GM12878 (cell line): ENCODE measurements at regions of chr5 and their contacts with region 1.

Region 1: DNA sequence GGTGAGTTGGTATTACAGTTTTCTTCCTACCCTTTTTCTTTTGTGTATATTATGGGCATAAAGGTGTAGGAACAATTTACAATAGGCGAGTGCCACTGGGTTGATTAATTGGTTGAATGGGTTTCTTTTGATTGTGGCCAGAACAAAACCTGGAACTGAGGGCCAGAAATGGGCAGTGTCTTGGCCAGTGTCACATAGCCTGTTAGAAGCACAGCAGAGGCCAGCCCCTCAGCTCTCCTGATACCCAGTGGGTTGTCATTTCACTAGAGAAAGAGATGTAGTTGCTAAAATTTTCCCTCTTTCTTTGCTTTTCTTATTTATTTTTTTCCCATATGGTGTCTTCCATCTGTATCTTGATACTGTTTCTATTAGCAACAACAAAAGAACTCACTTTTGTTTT is 38.8 kb upstream of the SEMA6A start:
- DNase-seq: no peak
- ATAC-seq: peak; percentile 87
- H3K4me3 ChIP-seq: no peak overlapping the region
- H3K27ac ChIP-seq: peak overlapping the region; percentile 69; the same call in 1 of the 2 replicates
- H3K4me1 ChIP-seq: peaks cover 17% of the 10 kb centered on the region
- H3K27me3 ChIP-seq: no peaks in the 10 kb centered on the region
- CTCF ChIP-seq: no peak
- EP300 ChIP-seq: no peak
- POLR2A ChIP-seq: no peak
- RAD21 ChIP-seq: no peak

Region 2: DNA sequence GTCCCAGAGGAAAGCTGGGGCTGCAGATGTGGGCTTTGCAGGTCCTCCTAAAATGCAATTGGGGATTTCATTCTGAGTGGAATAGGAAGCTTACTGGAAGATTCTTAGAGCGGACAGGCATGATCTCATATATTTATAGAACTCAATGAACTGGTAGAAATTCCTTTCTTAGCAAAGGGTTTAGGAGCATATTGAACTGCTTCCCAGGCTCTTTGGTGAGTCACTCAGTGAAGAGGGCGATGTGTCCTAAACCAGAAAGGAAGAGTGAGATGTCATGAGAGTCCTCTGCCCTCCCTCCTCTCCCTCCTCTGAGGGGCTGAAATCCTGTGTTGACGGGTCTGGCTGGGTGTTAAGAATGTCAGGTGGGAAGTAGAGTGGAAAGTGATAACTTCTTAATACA is 12.6 kb before region 1 on chr5:
- CTCF ChIA-PET with region 1: interaction called, 5 read pairs
- POLR2A ChIA-PET with region 1: interaction called, 4 read pairs
- RAD21 ChIA-PET with region 1: interaction called, 8 read pairs
- SMC1A ChIA-PET with region 1: interaction called, 110 read pairs
- in situ Hi-C with region 1: no loop called
- intact Hi-C with region 1: no loop called
- DNase-seq: no peak
- ATAC-seq: no peak
- H3K4me3 ChIP-seq: no peak overlapping the region
- H3K27ac ChIP-seq: no peak overlapping the region
- H3K4me1 ChIP-seq: no peaks in the 10 kb centered on the region
- H3K27me3 ChIP-seq: no peaks in the 10 kb centered on the region
- CTCF ChIP-seq: no peak
- EP300 ChIP-seq: no peak
- POLR2A ChIP-seq: no peak
- RAD21 ChIP-seq: no peak

Region 3: GRCh38 chr5:116640236-116640635 is 26.8 kb after region 1 on chr5:
- CTCF ChIA-PET with region 1: interaction called, 4 read pairs
- POLR2A ChIA-PET with region 1: interaction called, 3 read pairs
- RAD21 ChIA-PET with region 1: interaction called, 4 read pairs
- SMC1A ChIA-PET with region 1: interaction called, 61 read pairs
- in situ Hi-C with region 1: no loop called
- intact Hi-C with region 1: no loop called
- DNase-seq: no peak
- ATAC-seq: no peak
- H3K4me3 ChIP-seq: no peak overlapping the region
- H3K27ac ChIP-seq: no peak overlapping the region
- H3K4me1 ChIP-seq: no peaks in the 10 kb centered on the region
- H3K27me3 ChIP-seq: no peaks in the 10 kb centered on the region
- CTCF ChIP-seq: no peak
- EP300 ChIP-seq: no peak
- POLR2A ChIP-seq: no peak
- RAD21 ChIP-seq: no peak

Region 4: DNA sequence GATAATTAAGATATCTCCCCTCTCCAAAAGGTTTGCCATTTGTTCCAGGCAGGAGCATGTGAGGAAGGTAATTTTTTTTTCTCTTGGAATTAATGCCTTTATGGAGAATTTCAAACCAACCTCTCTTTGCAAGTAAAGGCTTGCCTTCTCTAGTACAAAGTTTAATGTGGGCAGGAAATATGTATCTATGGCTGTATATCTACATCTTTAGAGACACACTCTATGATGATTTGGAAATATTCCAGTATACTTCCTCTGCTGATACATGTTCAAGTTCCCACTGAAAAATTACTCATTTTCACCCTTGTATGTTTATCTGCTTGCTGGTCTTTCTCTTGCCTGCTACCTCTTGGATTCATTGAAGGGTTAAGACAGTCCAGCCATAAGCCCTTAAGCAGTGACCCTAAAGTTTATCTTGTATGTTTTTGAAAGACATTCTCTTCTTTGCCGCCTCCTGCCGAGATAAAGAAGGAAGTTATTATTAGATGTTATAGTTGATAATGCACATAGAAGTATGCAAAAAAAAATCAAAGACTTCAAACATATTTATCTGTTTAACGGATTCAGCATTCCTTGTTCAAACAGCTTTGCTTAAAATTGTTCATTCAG is 44.8 kb after region 1 on chr5:
- CTCF ChIA-PET with region 1: interaction called, 6 read pairs
- POLR2A ChIA-PET with region 1: interaction called, 8 read pairs
- RAD21 ChIA-PET with region 1: interaction called, 67 read pairs
- SMC1A ChIA-PET with region 1: interaction called, 5 read pairs
- in situ Hi-C with region 1: no loop called
- intact Hi-C with region 1: loop called (anchors 2 kb)
- DNase-seq: no peak
- ATAC-seq: peak; percentile 52
- H3K4me3 ChIP-seq: no peak overlapping the region
- H3K27ac ChIP-seq: no peak overlapping the region
- H3K4me1 ChIP-seq: no peaks in the 10 kb centered on the region
- H3K27me3 ChIP-seq: no peaks in the 10 kb centered on the region
- CTCF ChIP-seq: no peak; a peak in 1 of 6 replicates
- EP300 ChIP-seq: no peak
- POLR2A ChIP-seq: no peak
- RAD21 ChIP-seq: no peak

Region 5: DNA sequence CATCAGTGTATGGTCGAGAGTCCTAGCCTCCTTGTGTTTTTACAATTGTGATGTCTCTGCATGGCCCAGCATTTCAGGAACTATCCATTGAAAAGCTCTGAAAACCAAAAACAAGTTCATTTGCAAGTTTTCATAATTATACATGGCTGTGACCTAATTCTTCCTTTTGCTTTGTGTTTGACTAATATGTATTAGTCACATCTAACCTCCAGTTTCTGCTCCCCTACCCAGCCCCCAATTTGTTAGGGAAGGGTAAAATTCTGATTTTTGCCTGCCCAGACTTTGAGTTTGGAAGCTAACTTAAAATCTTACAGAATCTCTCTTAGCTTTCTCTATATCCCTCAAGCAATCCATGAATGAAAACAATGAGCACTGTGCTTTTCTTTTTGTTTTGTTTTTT is 89.3 kb after region 1 on chr5:
- CTCF ChIA-PET with region 1: interaction called, 3 read pairs
- POLR2A ChIA-PET with region 1: no interaction called
- RAD21 ChIA-PET with region 1: interaction called, 5 read pairs
- SMC1A ChIA-PET with region 1: interaction called, 25 read pairs
- in situ Hi-C with region 1: no loop called
- intact Hi-C with region 1: no loop called
- DNase-seq: no peak
- ATAC-seq: peak; percentile 72
- H3K4me3 ChIP-seq: no peak overlapping the region
- H3K27ac ChIP-seq: peak overlapping the region; percentile 31
- H3K4me1 ChIP-seq: peaks cover 26% of the 10 kb centered on the region
- H3K27me3 ChIP-seq: no peaks in the 10 kb centered on the region
- CTCF ChIP-seq: no peak
- EP300 ChIP-seq: peak in 1 of 2 experiments; percentile 66; a peak in 1 of 4 replicates
- POLR2A ChIP-seq: no peak
- RAD21 ChIP-seq: no peak

Region 6: GRCh38 chr5:117131048-117131679 is 517.7 kb after region 1 on chr5:
- CTCF ChIA-PET with region 1: no interaction called
- POLR2A ChIA-PET with region 1: no interaction called
- RAD21 ChIA-PET with region 1: no interaction called
- SMC1A ChIA-PET with region 1: no interaction called
- in situ Hi-C with region 1: no loop called
- intact Hi-C with region 1: no loop called
- DNase-seq: peak; percentile 61
- ATAC-seq: peak; percentile 98
- H3K4me3 ChIP-seq: no peak overlapping the region
- H3K27ac ChIP-seq: peak overlapping the region; percentile 38; the same call in 1 of the 2 replicates
- H3K4me1 ChIP-seq: peaks cover 3% of the 10 kb centered on the region; the same call in 1 of the 2 replicates
- H3K27me3 ChIP-seq: no peaks in the 10 kb centered on the region
- CTCF ChIP-seq: no peak
- EP300 ChIP-seq: no peak; a peak in 1 of 4 replicates
- POLR2A ChIP-seq: no peak
- RAD21 ChIP-seq: no peak